AG04450 (cell line): ENCODE measurements at regions of chr9 and their contacts with region 1.

Region 1: GRCh38 chr9:115022760-115023434 is 92.5 kb upstream of the TNFSF8 start:
- DNase-seq: peak; percentile 76
- H3K4me3 ChIP-seq: no peak overlapping the region
- H3K27ac ChIP-seq: peak overlapping the region; percentile 41
- H3K27me3 ChIP-seq: no peaks in the 10 kb centered on the region
- CTCF ChIP-seq: no peak

Region 2: GRCh38 chr9:115104908-115105307 is 82.0 kb after region 1 on chr9:
- CTCF ChIA-PET with region 1: no interaction called
- POLR2A ChIA-PET with region 1: no interaction called
- DNase-seq: no peak
- H3K4me3 ChIP-seq: no peak overlapping the region
- H3K27ac ChIP-seq: no peak overlapping the region
- H3K27me3 ChIP-seq: no peaks in the 10 kb centered on the region
- CTCF ChIP-seq: no peak

Region 3: DNA sequence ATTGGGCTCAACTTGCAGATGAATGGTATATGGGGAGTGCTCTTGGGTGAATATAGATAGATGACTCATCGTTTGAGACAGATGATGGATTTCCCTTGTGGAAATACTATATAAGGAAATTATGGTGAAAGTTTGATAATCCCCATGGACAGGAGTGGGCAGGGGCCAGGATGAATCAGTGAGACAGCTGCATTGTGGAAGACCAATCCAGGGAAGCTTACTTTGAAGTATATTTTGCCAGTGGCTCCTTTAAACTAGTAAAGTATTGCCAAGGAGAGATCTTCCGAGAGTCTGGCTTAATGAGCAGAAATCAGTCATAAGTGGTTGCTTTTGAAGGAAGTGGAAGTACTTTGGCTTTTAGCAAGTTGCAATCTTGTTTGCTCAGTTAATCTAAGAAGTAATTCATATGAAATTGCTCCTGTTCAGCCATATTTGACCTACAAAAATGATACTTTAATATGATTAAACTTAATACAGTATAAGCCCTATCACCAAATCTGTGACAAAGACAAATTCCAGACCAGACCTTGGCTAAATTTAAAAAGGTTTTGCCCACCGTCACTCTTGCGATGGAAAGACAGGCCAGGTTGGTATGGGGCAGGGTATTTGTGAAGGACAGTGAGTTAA is 104.4 kb after region 1 on chr9:
- CTCF ChIA-PET with region 1: no interaction called
- POLR2A ChIA-PET with region 1: no interaction called
- DNase-seq: peak; percentile 62
- H3K4me3 ChIP-seq: no peak overlapping the region
- H3K27ac ChIP-seq: no peak overlapping the region
- H3K27me3 ChIP-seq: no peaks in the 10 kb centered on the region
- CTCF ChIP-seq: no peak

Region 4: GRCh38 chr9:115202181-115202580 is 179.3 kb after region 1 on chr9:
- CTCF ChIA-PET with region 1: no interaction called
- POLR2A ChIA-PET with region 1: no interaction called
- DNase-seq: no peak
- H3K4me3 ChIP-seq: no peak overlapping the region
- H3K27ac ChIP-seq: no peak overlapping the region
- H3K27me3 ChIP-seq: no peaks in the 10 kb centered on the region
- CTCF ChIP-seq: no peak

Region 5: DNA sequence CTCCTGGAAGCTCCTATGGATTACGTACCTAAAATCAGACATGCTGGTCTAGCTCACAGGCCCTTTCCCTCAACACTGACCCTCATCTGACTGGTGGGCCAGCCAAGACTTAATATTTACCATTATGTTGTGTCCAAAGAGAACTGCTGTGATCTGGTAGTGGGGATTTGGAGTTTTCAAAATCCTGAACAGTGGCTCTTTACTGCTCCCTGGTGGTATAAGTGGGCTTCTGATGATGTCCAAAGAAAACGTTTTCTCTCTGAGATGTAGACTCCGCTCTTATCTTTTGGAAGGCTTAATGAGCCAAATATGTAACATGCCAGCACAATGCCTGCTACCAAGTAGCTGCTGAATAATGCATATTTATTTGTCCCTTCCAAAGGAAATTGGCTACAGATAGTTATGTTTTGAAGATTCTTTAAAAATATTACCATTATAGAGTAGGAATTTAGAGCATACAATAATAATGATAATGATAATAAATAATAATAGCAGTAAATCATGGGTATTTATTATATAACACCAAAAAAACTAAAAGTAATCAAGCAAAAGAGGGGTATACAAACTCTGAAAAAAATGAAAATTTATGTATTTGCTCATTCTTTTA is 501.7 kb after region 1 on chr9:
- CTCF ChIA-PET with region 1: interaction called, 12 read pairs
- POLR2A ChIA-PET with region 1: no interaction called
- DNase-seq: peak; percentile 55
- H3K4me3 ChIP-seq: no peak overlapping the region
- H3K27ac ChIP-seq: no peak overlapping the region
- H3K27me3 ChIP-seq: no peaks in the 10 kb centered on the region
- CTCF ChIP-seq: peak; percentile 87